ENCODE measurements at regions of chr2 and their contacts with region 1.

Region 1: DNA sequence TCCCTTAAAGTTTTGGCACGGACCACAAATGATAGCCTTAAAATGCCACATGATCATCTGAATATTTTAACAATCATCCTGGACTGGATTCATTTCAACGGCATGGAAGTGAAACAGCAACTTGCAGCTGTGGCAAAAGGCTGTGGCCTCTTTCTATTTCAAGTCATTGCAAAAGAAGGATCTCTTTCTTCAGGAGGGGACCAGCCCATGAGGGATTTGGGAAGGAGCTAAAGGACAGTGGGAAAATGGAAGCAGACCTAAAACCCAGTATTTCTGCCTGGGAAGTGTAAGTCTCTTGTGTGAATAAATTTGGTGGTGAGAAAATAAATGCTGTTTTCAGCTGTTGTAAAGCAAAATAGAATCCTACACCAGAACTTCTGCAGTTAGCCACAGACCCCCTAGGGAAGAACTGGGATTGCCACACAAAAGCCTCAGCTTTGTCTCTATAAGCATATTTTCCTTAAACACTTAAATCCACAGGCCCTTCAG is 107.3 kb upstream of the ZFP36L2 start:
- DNase-seq: no peak
- ATAC-seq: peak; percentile 73

Region 2: GRCh38 chr2:43178602-43179542 is 154.8 kb before region 1 on chr2:
- intact Hi-C with region 1: no loop called
- DNase-seq: peak; percentile 83
- ATAC-seq: peak; percentile 87

Region 3: GRCh38 chr2:43269074-43269572 is 64.6 kb before region 1 on chr2:
- intact Hi-C with region 1: loop called (anchors 5 kb)
- DNase-seq: peak; percentile 94
- ATAC-seq: peak; percentile 84

Region 4: GRCh38 chr2:43408407-43409160 is 74.9 kb after region 1 on chr2:
- intact Hi-C with region 1: loop called (anchors 10 kb)
- DNase-seq: no peak
- ATAC-seq: peak; percentile 65

Region 5: GRCh38 chr2:43478411-43479086 is 144.8 kb after region 1 on chr2:
- intact Hi-C with region 1: loop called (anchors 10 kb)
- DNase-seq: no peak
- ATAC-seq: no peak